Endothelial cell of umbilical vein (primary cell): ENCODE measurements at regions of chr3 and their contacts with region 1.

Region 1: GRCh38 chr3:32467333-32468070 is 35.1 kb downstream of the CMTM6 start:
- DNase-seq: peak; percentile 89
- H3K4me3 ChIP-seq: peak overlapping the region in 1 of 3 experiments; percentile 6
- H3K27ac ChIP-seq: no peak overlapping the region
- H3K4me1 ChIP-seq: peaks cover 37% of the 10 kb centered on the region
- H3K27me3 ChIP-seq: no peaks in the 10 kb centered on the region
- CTCF ChIP-seq: peak; percentile 98 to 99
- POLR2A ChIP-seq: no peak

Region 2: DNA sequence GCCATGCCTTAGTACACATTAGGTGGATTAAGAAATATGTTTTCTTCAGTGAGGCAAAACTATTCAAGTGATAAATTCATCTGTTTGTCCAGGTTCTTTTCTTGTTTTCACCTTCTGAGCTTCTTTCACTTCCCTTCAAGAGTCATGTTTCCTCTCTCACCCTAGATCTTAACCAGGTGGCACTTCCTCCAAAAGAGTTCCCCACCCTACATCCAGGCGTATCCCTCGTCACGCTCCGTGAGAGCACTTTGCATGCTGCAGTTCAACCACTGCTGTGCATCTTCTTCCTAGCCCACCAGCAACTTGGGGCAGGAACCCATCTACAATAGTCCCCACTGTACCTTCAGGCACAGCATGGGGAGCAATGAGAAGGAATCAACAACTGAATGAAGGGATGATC is 515.3 kb before region 1 on chr3:
- CTCF ChIA-PET with region 1: no interaction called
- POLR2A ChIA-PET with region 1: no interaction called
- dilution Hi-C with region 1: no loop called
- intact Hi-C with region 1: no loop called
- DNase-seq: no peak
- H3K4me3 ChIP-seq: no peak overlapping the region
- H3K27ac ChIP-seq: no peak overlapping the region
- H3K4me1 ChIP-seq: no peaks in the 10 kb centered on the region
- H3K27me3 ChIP-seq: no peaks in the 10 kb centered on the region
- CTCF ChIP-seq: no peak
- POLR2A ChIP-seq: no peak

Region 3: GRCh38 chr3:32366638-32367397 is 100.7 kb before region 1 on chr3:
- CTCF ChIA-PET with region 1: interaction called, 22 read pairs
- POLR2A ChIA-PET with region 1: no interaction called
- dilution Hi-C with region 1: no loop called
- intact Hi-C with region 1: no loop called
- DNase-seq: peak; percentile 8
- H3K4me3 ChIP-seq: no peak overlapping the region
- H3K27ac ChIP-seq: no peak overlapping the region
- H3K4me1 ChIP-seq: peaks cover 7% of the 10 kb centered on the region
- H3K27me3 ChIP-seq: no peaks in the 10 kb centered on the region
- CTCF ChIP-seq: no peak
- POLR2A ChIP-seq: no peak

Region 4: GRCh38 chr3:32391643-32392535 is 75.6 kb before region 1 on chr3 and contains the start of gene CMTM7:
- CTCF ChIA-PET with region 1: interaction called, 39 read pairs
- POLR2A ChIA-PET with region 1: no interaction called
- dilution Hi-C with region 1: no loop called
- intact Hi-C with region 1: no loop called
- DNase-seq: peak; percentile 65
- H3K4me3 ChIP-seq: peak within 1 kb of the TSS; percentile 67 to 94 (median 82)
- H3K27ac ChIP-seq: peak within 1 kb of the TSS; percentile 77
- H3K4me1 ChIP-seq: peaks cover 14% of the 10 kb centered on the region
- H3K27me3 ChIP-seq: no peaks in the 10 kb centered on the region
- CTCF ChIP-seq: no peak
- POLR2A ChIP-seq: peak; percentile 93
- total RNA-seq, gene CMTM7: 44.7 and 47.1 TPM in 2 replicates

Region 5: GRCh38 chr3:32414520-32415202 is 52.8 kb before region 1 on chr3:
- CTCF ChIA-PET with region 1: interaction called, 56 read pairs
- POLR2A ChIA-PET with region 1: interaction called, 4 read pairs
- dilution Hi-C with region 1: no loop called
- intact Hi-C with region 1: no loop called
- DNase-seq: peak; percentile 94
- H3K4me3 ChIP-seq: no peak overlapping the region
- H3K27ac ChIP-seq: peak overlapping the region; percentile 89
- H3K4me1 ChIP-seq: peaks cover 52% of the 10 kb centered on the region
- H3K27me3 ChIP-seq: no peaks in the 10 kb centered on the region
- CTCF ChIP-seq: no peak
- POLR2A ChIP-seq: no peak

Region 6: GRCh38 chr3:32443478-32443877 is 24.0 kb before region 1 on chr3:
- CTCF ChIA-PET with region 1: interaction called, 9 read pairs
- POLR2A ChIA-PET with region 1: no interaction called
- dilution Hi-C with region 1: no loop called
- intact Hi-C with region 1: loop called (anchors 1 kb)
- DNase-seq: peak; percentile 96
- H3K4me3 ChIP-seq: no peak overlapping the region
- H3K27ac ChIP-seq: peak overlapping the region; percentile 60
- H3K4me1 ChIP-seq: peaks cover 22% of the 10 kb centered on the region
- H3K27me3 ChIP-seq: no peaks in the 10 kb centered on the region
- CTCF ChIP-seq: no peak
- POLR2A ChIP-seq: no peak

Region 7: GRCh38 chr3:32570421-32571191 is 103.1 kb after region 1 on chr3 and contains the start of gene DYNC1LI1:
- CTCF ChIA-PET with region 1: interaction called, 4 read pairs
- POLR2A ChIA-PET with region 1: no interaction called
- dilution Hi-C with region 1: no loop called
- intact Hi-C with region 1: loop called (anchors 2 kb)
- DNase-seq: peak; percentile 95
- H3K4me3 ChIP-seq: peak within 1 kb of the TSS; percentile 81 to 99 (median 91)
- H3K27ac ChIP-seq: peak within 1 kb of the TSS; percentile 93
- H3K4me1 ChIP-seq: peaks cover 19% of the 10 kb centered on the region
- H3K27me3 ChIP-seq: no peaks in the 10 kb centered on the region
- CTCF ChIP-seq: no peak
- POLR2A ChIP-seq: peak; percentile 95
- total RNA-seq, gene DYNC1LI1: 45.6 and 47.6 TPM in 2 replicates